Colonic mucosa (tissue), 4 donors: ENCODE measurements at regions of chr18 and their contacts with region 1.

Region 1: GRCh38 chr18:58043491-58044379 is at the start of gene NEDD4L:
- DNase-seq: peak; percentile 90
- H3K4me3 ChIP-seq: peak within 1 kb of the TSS; percentile 99
- H3K27ac ChIP-seq: peak within 1 kb of the TSS; percentile 88
- H3K4me1 ChIP-seq: peaks cover 6% of the 10 kb centered on the region
- H3K27me3 ChIP-seq: no peaks in the 10 kb centered on the region
- CTCF ChIP-seq: peak; percentile 89
- total RNA-seq, gene NEDD4L: 149 to 212 TPM

Region 2: DNA sequence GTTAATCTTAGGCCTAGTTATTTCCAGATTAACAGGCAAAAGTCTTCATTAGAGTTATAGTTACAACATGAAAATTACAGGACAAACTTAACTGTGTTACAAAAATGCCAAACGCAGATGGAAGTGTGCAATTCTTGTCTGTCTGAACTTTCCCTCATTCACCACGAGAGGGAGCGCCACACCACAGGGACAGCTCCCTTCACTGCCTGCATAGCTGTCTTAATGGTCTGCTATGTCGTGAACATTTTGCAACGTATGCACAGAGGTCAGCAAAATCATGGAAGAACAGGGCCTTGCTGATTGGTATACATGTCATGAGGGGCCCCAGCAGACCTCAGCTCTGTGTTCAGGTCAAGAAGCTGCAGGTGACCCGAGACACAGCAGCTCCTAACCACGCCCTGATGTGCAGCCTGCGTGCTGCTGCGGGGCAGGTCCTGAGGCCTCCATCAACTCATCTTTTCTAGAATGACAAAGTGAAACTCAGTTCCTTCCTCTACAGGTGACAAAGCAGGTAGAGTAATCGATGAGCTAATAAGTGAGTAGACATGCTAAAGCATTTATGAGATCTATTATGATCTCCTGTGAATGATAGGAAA is 161.8 kb before region 1 on chr18:
- intact Hi-C with region 1: loop called (anchors 10 kb)
- DNase-seq: peak; percentile 68
- H3K4me3 ChIP-seq: no peak overlapping the region
- H3K27ac ChIP-seq: no peak overlapping the region
- H3K4me1 ChIP-seq: no peaks in the 10 kb centered on the region
- H3K27me3 ChIP-seq: no peaks in the 10 kb centered on the region
- CTCF ChIP-seq: peak; percentile 84